Endothelial cell of umbilical vein (primary cell): ENCODE measurements at regions of chr22 and their contacts with region 1.

Region 1: DNA sequence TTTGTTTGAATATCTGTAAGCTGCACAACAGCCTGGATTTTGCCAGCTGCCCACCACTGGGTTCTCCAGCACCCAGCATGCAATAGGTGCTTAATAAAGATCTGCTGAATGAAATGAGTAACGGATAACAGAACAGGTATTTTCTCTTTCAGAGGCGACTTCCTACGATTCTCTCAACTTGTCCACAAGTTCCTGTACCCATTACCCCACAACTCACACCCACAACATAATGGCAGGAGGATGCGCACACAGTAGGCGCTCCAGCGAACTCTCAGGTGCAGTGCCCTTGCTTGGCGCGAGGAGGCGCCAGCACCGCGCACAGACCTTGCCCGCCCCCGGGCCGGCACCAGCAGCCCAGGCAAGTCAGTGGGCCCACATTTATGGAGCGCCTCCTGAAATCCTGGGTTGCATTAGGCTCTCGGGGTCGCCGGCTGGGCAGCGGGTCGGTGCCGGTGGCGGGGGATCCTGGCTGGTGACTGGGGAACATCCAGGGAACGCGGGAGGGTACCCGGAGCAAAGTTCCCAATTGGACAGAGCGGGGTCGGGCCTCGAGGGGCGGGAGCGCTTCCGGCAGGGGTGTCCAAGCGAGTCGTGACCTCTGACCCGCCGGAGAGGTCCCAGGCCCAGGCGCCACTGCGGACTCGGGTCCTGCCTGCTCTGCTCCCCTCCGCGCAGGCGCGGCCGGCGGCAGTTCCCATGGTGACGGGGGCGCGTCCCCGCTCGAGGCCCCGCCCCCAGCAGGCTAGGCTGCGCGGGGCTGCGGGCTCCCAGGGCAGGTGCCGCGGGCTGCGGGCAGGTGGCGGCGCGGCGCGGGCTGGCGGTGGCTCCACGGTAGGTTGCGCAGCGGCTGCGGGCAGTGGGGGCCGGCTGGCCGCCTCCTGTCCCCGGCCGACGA is at the start of gene KIAA1671:
- DNase-seq: peak; percentile 87
- H3K4me3 ChIP-seq: peak within 1 kb of the TSS; percentile 56 to 82 (median 70)
- H3K27ac ChIP-seq: peak within 1 kb of the TSS; percentile 94
- H3K4me1 ChIP-seq: peaks cover 9% of the 10 kb centered on the region
- H3K27me3 ChIP-seq: peaks cover 0 to 9% of the 10 kb centered on the region in 2 experiments
- CTCF ChIP-seq: peak; percentile 99 to 100
- POLR2A ChIP-seq: no peak
- total RNA-seq, gene KIAA1671: 78.9 and 85.1 TPM in 2 replicates

Region 2: DNA sequence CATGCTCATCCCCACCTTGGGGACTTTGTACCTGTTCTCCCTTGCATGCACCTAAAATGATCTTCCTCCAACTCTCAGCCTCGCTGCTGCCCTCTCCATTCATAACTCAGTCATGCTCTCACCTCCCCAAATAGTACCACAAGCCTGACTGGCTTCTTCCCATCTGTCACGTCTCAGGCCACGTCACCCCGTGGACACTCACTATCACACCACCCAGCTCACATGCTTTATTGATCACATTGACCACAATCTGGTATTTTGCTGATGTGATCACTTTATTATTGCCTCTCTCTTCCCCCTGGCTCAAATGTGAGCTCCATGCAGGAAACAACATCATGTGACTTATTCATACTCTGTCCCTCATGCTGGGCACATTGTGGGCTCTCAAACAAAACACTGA is 155.3 kb before region 1 on chr22:
- CTCF ChIA-PET with region 1: no interaction called
- POLR2A ChIA-PET with region 1: no interaction called
- dilution Hi-C with region 1: no loop called
- intact Hi-C with region 1: no loop called
- DNase-seq: no peak
- H3K4me3 ChIP-seq: no peak overlapping the region
- H3K27ac ChIP-seq: no peak overlapping the region
- H3K4me1 ChIP-seq: no peaks in the 10 kb centered on the region
- H3K27me3 ChIP-seq: no peaks in the 10 kb centered on the region
- CTCF ChIP-seq: no peak
- POLR2A ChIP-seq: no peak

Region 3: DNA sequence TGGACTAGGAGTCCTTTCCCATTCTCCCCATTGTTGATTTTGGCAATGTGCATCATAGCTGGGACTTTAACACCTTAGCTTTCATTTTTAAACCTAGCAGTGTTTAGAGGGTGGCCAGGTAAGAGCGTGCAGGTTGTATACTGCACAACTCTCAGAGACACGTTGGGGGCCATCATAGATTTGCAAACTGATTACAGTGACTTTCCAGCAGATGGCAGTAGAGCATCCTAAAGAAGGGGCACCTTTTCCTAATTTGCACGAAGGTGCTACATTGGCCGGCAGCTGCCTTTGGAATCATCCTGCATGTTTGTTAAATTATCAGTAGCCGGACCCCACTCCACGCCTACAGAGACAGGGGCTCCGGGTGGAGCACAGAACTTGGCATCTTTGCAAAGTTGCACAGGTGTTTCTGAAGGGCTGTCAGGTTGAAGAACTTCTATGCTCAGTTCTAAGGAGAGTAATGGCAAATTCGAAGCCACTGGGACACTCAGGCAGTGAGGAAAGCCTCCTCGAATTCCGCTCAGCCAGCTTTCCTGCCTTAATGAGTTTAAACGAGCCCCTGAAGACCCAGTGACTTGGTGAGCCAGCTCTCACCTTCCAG is 13.3 kb before region 1 on chr22:
- CTCF ChIA-PET with region 1: interaction called, 3 read pairs
- POLR2A ChIA-PET with region 1: no interaction called
- dilution Hi-C with region 1: no loop called
- intact Hi-C with region 1: loop called (anchors 1 kb)
- DNase-seq: peak; percentile 43
- H3K4me3 ChIP-seq: no peak overlapping the region
- H3K27ac ChIP-seq: no peak overlapping the region
- H3K4me1 ChIP-seq: no peaks in the 10 kb centered on the region
- H3K27me3 ChIP-seq: peaks cover 14% of the 10 kb centered on the region in 2 experiments
- CTCF ChIP-seq: peak; percentile 61 to 67
- POLR2A ChIP-seq: no peak

Region 4: GRCh38 chr22:24969560-24970301 is 17.5 kb after region 1 on chr22:
- CTCF ChIA-PET with region 1: interaction called, 4 read pairs
- POLR2A ChIA-PET with region 1: no interaction called
- dilution Hi-C with region 1: no loop called
- intact Hi-C with region 1: loop called (anchors 2 kb)
- DNase-seq: peak; percentile 86
- H3K4me3 ChIP-seq: no peak overlapping the region
- H3K27ac ChIP-seq: peak overlapping the region; percentile 82
- H3K4me1 ChIP-seq: peaks cover 34% of the 10 kb centered on the region
- H3K27me3 ChIP-seq: no peaks in the 10 kb centered on the region
- CTCF ChIP-seq: no peak
- POLR2A ChIP-seq: no peak

Region 5: GRCh38 chr22:24985826-24986214 is 33.6 kb after region 1 on chr22:
- CTCF ChIA-PET with region 1: interaction called, 13 read pairs
- POLR2A ChIA-PET with region 1: interaction called, 3 read pairs
- dilution Hi-C with region 1: no loop called
- intact Hi-C with region 1: loop called (anchors 1 kb)
- DNase-seq: peak; percentile 99
- H3K4me3 ChIP-seq: no peak overlapping the region
- H3K27ac ChIP-seq: peak overlapping the region; percentile 88
- H3K4me1 ChIP-seq: peaks cover 66% of the 10 kb centered on the region
- H3K27me3 ChIP-seq: no peaks in the 10 kb centered on the region
- CTCF ChIP-seq: no peak
- POLR2A ChIP-seq: peak; percentile 89

Region 6: DNA sequence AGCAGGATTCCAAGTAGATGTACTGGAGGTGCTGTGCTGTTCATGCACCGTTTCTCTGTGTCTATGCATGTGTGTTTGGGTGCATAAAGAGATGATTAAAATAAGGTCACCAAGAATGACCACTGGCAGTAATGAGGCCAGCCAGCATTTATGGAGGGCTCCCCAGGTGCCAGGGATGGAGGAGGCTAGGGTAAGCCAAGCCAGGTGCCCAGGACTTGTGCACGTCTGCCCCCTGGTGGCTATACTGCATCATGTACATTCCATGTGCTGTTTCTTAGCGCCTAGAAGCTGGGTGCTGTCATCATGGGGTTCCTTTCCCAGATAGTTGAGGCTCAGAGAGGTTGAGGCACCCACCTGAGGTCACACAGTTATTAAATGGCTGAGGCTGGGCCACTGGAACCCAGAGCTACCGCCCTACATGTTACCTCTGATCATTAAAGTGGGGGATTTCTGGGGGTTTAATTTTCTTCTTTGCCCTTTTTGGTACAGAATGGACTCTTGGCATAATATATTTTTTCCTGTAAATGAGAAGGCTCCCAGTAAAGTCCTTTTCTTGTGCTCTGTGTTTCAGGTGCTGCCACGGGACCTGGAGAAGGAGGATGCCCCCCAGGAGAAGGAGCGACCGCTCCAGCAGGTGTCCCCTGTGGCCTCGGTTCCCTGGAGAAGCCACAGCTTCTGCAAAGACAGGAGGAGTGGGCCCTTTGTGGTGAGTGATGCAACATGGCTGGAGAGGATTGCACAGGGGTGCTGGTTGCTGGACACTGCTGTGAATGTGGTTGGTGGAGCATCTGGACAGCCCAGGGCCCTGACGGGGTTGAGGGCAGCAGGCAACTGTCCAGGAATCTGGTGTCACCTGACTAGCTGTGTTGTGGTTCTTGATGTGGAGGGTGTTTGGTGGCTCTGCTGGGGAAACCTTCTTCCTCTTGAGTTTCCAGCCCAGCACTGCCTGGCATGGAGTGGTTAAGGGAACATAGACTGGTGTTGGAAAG is 96.8 kb after region 1 on chr22:
- CTCF ChIA-PET with region 1: interaction called, 378 read pairs
- POLR2A ChIA-PET with region 1: interaction called, 3 read pairs
- dilution Hi-C with region 1: no loop called
- intact Hi-C with region 1: loop called (anchors 1 kb)
- DNase-seq: peak; percentile 63
- H3K4me3 ChIP-seq: no peak overlapping the region
- H3K27ac ChIP-seq: no peak overlapping the region
- H3K4me1 ChIP-seq: peaks cover 4% of the 10 kb centered on the region
- H3K27me3 ChIP-seq: no peaks in the 10 kb centered on the region
- CTCF ChIP-seq: peak; percentile 82 to 88
- POLR2A ChIP-seq: no peak

Region 7: DNA sequence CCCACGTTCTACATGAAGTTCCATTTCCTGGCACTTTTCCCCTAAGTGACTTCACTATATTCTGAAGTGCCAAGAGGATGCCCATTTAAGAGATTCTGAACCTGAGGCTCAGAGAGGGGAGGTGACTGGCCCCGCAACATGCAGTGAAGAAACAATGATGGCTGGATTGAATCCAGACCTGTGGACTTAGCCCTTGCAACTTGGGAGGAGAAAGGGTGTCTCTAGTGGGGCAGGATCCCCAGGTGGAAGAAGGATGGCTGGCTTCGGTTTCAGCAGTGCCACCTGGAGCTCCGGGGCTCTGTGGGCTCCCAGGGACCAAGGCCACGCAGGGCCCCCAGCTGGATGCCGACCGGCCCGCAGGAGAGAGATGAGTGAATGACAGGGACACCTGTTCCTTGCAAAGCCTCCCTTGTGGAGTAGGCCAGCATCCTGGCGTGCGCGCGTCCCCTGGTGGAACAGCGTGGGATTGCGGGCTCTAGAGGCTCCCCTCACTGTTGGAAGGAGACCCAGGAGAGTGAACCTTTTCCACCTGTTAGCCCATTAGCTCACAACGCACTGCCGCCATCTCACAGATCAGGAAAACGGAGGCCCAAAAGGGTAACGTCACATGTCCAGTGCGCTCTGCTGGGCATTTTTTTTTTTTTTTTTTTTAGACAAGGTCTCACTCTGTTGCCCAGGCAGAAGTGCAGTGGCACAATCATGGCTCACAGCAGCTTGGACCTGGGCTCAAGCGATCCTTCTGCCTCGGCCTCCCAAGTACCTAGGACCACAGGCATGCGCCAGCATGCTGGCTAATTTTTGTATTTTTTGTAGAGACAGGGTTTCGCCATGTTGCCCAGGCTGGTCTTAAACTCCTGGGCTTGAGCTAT is 105.1 kb after region 1 on chr22:
- CTCF ChIA-PET with region 1: interaction called, 378 read pairs
- POLR2A ChIA-PET with region 1: interaction called, 3 read pairs
- dilution Hi-C with region 1: no loop called
- intact Hi-C with region 1: loop called (anchors 2 kb)
- DNase-seq: peak; percentile 63
- H3K4me3 ChIP-seq: no peak overlapping the region
- H3K27ac ChIP-seq: no peak overlapping the region
- H3K4me1 ChIP-seq: peaks cover 19% of the 10 kb centered on the region
- H3K27me3 ChIP-seq: no peaks in the 10 kb centered on the region
- CTCF ChIP-seq: peak; percentile 86 to 99
- POLR2A ChIP-seq: no peak